Activated CD8-positive, alpha-beta T cell treated with anti-CD3 and anti-CD28 coated beads for 36 hours (primary cell): ENCODE measurements at regions of chr20 and their contacts with region 1.

Region 1: DNA sequence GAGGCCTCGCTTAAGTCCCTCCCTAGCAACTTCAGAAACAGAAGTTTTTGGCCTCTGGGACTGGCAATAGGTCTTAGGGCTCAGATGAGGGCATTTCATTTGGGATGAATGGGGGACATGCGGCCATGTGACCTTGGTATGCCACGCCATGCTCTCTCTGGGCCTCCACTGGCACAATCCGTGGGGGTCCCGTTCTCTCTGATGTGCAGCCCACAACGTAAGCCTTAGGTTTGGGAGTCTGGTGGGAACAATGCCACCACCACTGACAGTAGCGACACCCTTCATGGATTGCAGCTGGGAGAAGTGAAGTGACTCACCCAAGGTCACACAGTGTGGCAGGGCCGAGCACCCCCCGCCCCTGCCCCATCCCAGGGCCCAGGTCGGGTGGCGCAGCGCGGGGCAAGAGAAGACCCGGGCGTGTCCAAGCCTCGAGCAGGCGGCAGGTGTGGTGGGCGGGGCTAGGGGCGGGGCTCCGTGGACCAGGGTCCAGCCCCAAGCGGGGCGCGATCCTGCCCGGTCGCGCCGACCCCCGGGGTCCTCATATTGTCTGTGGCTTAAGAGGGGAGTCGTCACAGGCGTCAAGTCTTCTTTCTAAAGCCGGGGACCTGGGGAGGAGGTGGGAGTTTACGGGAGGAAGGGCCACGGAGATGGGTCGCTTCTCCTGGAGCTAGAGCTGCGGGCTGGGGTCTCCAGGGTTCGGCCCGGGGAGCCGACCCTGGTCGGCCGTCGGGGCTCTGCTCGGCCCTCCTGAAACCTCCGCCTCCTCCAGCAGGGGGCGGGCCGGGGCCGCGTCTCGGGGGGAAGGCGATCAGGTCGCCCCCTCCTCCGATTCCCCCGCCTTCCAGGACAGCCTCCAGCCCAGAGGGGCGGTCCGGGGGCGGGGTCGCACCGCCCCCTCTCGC is 698 bp upstream of the CEBPB start:
- DNase-seq: peak; percentile 87
- ATAC-seq: peak; percentile 64
- H3K4me3 Mint-ChIP-seq: peak overlapping the region; percentile 35
- H3K27ac Mint-ChIP-seq: no peak overlapping the region
- H3K4me1 Mint-ChIP-seq: peaks cover 17% of the 10 kb centered on the region
- H3K27me3 Mint-ChIP-seq: peaks cover 9% of the 10 kb centered on the region
- CTCF ChIP-seq: peak; percentile 68

Region 2: DNA sequence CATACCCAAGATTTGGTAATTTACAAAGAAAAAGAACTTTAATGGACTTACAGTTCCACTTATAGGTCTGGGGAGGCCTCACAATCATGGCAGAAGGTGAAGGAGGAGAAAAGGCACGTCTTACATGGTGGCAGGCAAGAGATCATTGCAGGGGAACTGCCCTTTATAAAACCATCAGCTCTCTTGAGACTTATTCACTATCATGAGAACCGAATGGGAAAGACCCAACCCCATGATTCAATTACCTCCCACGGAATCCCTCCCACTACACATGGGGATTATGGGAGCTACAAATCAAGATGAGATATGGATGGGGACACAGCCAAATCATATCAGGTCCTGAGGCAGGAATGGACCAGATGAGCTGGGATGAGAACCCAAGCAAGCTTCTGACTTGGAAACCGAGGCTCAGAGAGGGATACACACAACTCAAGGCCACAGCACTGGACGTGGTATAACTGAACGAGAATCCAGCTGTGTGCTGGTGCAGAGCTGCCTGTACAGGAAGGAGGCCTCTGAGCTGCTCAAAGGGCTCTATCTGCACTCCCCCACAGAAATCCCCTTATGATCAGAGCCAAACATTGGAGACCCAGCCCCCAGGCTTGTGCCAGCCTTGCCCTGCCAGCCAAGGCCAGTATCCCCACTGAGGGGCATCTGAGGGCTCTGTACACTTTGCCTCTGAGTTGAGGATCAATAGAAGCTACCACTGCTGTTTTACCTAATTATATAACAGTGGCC is 138.5 kb after region 1 on chr20:
- CTCF ChIA-PET with region 1: no interaction called
- POLR2A ChIA-PET with region 1: no interaction called
- intact Hi-C with region 1: no loop called
- DNase-seq: no peak
- ATAC-seq: no peak
- H3K4me3 Mint-ChIP-seq: no peak overlapping the region
- H3K27ac Mint-ChIP-seq: no peak overlapping the region
- H3K4me1 Mint-ChIP-seq: no peaks in the 10 kb centered on the region
- H3K27me3 Mint-ChIP-seq: peaks cover 11% of the 10 kb centered on the region
- CTCF ChIP-seq: no peak

Region 3: DNA sequence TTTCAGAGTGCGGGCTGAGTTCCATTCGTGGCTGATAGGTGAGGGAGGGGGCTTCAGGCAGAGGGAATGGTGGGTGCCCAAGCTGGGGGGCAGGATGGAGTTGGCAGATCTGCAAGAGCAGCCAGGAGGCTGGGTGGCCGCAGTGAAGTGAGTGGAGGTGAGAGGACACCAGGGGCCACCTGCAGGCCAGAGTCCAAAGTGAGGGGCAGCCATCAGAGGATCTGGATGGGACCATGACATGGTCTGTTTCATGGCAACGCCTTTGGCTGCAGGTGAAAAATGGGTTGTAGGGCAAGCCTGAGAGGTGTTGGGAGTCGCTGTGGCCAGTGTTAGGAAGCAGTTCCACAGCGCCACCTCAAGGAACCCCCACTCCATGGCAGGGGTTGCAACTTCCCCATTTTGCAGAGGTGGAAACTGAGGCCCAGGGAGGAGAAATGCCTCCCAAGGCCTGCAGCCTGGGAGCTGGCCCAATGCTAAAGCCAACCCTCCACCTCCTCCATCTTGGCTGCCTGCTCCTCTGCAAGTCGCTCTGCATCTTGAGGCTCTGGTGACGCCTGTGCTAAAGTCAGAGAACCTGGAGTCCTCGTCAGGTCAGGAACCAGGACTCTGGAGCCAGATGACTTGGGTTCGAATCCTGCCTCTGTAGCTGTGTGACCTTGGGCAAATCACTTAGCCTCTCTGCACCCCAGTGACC is 154.4 kb after region 1 on chr20:
- CTCF ChIA-PET with region 1: no interaction called
- POLR2A ChIA-PET with region 1: interaction called, 3 read pairs
- intact Hi-C with region 1: loop called (anchors 5 kb)
- DNase-seq: peak; percentile 38
- ATAC-seq: no peak
- H3K4me3 Mint-ChIP-seq: no peak overlapping the region
- H3K27ac Mint-ChIP-seq: no peak overlapping the region
- H3K4me1 Mint-ChIP-seq: peaks cover 34% of the 10 kb centered on the region
- H3K27me3 Mint-ChIP-seq: peaks cover 8% of the 10 kb centered on the region
- CTCF ChIP-seq: peak; percentile 14

Region 4: GRCh38 chr20:50460460-50461267 is 270.7 kb after region 1 on chr20:
- CTCF ChIA-PET with region 1: interaction called, 102 read pairs
- POLR2A ChIA-PET with region 1: interaction called, 4 read pairs
- intact Hi-C with region 1: loop called (anchors 1 kb)
- DNase-seq: peak; percentile 89
- ATAC-seq: peak; percentile 92
- H3K4me3 Mint-ChIP-seq: no peak overlapping the region
- H3K27ac Mint-ChIP-seq: no peak overlapping the region
- H3K4me1 Mint-ChIP-seq: peaks cover 3% of the 10 kb centered on the region
- H3K27me3 Mint-ChIP-seq: peaks cover 5% of the 10 kb centered on the region
- CTCF ChIP-seq: peak; percentile 86

Region 5: GRCh38 chr20:50467718-50468356 is 277.9 kb after region 1 on chr20:
- CTCF ChIA-PET with region 1: interaction called, 102 read pairs
- POLR2A ChIA-PET with region 1: interaction called, 4 read pairs
- intact Hi-C with region 1: loop called (anchors 1 kb)
- DNase-seq: peak; percentile 57
- ATAC-seq: peak; percentile 67
- H3K4me3 Mint-ChIP-seq: no peak overlapping the region
- H3K27ac Mint-ChIP-seq: no peak overlapping the region
- H3K4me1 Mint-ChIP-seq: peaks cover 8% of the 10 kb centered on the region
- H3K27me3 Mint-ChIP-seq: peaks cover 1% of the 10 kb centered on the region
- CTCF ChIP-seq: no peak